Heart left ventricle (tissue), 16 donors: ENCODE measurements at regions of chr16 and their contacts with region 1.

Region 1: DNA sequence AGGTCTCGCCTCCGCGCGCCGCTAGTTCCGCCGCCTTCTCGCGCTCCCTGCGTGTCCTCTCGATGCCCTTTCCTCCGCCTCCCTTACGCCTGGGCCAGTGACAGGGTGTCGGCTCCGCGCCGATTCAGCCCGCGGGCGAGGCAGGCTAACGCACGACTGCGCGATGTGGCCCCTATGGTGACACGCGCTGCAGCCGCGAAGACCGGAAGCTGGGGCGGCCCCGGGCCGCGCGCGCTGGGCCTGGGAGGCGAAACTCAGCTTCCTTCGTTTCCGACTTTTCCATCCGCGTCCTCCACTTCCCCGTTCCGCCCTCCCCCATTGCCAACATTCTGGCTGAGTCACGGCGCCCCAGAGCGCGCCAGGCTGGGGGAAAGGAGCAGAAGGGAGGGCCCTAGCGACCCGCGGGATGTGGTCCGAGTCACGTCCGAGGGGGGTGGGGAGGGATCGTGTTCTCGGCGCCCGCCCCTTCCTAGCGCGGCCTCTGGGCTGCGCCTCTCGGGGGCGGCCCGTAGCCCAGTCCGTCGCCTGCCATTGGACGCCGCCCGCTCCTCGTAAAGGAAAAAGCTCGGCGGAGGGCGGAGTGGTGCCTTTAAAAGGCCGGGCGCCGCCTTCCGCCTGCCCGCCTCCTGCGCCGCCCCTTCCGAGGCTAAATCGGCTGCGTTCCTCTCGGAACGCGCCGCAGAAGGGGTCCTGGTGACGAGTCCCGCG is at the start of gene ALDOA:
- DNase-seq: peak; percentile 99
- ATAC-seq: peak; percentile 87 to 93 (median 90)
- H3K4me3 ChIP-seq: peak within 1 kb of the TSS; percentile 84 to 99 (median 96)
- H3K27ac ChIP-seq: peak within 1 kb of the TSS; percentile 92 to 100 (median 99)
- H3K4me1 ChIP-seq: peaks cover 0 to 63% (median 55%) of the 10 kb centered on the region in 12 donors
- H3K27me3 ChIP-seq: no peaks in the 10 kb centered on the region
- CTCF ChIP-seq: peak in 1 of 12 donors; percentile 27
- POLR2A ChIP-seq: peak; percentile 98 to 99
- total RNA-seq, gene ALDOA: 2,644 to 5,076 (median 3,574) TPM

Region 2: DNA sequence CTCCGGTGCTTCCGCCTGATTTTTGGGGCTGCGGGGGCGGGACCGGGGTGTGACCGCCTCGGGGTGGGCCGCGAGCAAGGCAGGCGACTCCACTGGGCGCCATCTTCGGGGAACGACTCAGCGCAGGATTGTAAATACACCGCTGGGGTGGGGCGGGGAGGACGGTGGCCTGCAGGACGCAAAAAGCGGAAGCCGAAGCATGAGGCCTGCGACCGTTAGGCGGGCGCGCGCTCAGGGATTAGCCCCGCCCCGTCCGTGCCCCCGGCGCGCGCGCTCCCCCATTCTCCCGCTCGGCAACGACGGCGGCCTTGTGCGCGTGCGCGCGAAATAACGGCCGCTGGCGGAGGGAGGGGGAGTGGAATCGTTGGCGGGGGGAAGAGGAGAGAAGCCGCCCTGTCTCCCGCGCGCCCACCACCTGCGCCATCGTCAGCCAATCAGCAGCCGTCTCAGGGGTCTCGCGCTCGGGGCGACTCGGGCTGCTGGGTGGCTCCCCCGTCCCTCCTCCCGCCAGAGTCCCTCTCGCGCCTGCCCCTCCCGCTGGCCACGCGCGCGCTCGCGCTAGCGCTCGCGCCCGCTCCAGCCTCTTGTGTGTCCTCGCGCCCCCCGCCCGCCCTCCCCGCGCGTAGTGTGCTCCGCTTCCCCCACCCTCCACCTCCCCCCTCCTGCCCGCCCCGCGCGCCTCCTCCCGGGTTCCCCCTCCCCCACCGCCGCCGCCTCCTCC is 259.8 kb before region 1 on chr16:
- intact Hi-C with region 1: loop called in 1 of 10 experiments (anchors 5 kb)
- DNase-seq: peak; percentile 98 to 99 (median 98)
- ATAC-seq: peak; percentile 84 to 89 (median 88)
- H3K4me3 ChIP-seq: peak overlapping the region; percentile 65 to 98 (median 83)
- H3K27ac ChIP-seq: peak overlapping the region; percentile 95 to 100 (median 99)
- H3K4me1 ChIP-seq: peaks cover 3 to 47% (median 42%) of the 10 kb centered on the region in 12 donors
- H3K27me3 ChIP-seq: no peaks in the 10 kb centered on the region
- CTCF ChIP-seq: no peak
- POLR2A ChIP-seq: peak in 1 of 2 donors; percentile 81

Region 3: DNA sequence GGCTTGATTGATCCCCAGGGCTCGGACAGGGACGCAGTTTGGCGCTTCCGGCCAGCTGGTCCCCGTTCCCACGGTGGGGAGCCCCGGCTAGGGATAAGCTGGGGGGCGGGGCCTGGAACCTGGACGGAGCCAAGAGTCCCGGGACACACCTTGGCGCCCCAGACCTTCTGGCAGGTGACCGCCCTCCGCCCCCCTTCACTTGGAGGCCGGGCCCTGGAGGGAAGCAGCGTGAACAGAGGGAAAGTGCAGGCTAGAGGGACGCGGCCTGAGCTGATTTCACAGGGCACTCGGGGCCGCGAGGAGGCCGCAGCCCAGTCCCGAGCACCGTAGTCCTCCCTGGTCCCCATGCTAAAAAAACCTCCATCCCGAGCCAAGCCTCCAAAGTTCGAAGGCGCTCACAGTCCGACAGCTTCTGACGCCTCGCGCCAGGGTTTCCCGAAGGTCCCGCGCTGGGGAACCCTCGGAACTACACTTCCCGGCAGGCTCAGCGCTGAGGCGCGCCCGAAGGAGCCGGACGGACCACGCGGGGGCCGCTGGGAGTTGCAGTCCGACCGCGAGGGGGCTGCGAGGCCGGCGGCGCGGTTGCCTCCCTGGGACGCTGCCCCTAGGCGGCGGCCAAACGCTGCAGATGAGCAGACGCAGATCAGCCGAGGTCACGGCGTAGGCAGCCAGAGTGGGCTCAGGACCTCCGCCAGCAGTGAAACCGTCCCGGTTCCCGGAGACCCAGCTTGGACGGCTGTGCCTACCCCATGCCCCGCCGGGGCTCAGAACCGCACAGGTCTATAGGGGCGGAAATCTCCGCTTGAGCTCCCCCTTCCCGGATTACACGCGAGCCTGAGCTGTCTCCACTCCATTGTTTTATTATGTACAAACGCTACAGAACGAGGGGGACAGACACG is 26.4 kb after region 1 on chr16 and contains the start of gene TBX6:
- intact Hi-C with region 1: loop called in 1 of 10 experiments (anchors 1 kb)
- DNase-seq: peak; percentile 94 to 98 (median 95)
- ATAC-seq: peak; percentile 83 to 91 (median 90)
- H3K4me3 ChIP-seq: peak within 1 kb of the TSS; percentile 24 to 66 (median 56)
- H3K27ac ChIP-seq: peak within 1 kb of the TSS; percentile 34 to 95 (median 88)
- H3K4me1 ChIP-seq: peaks cover 4 to 69% (median 41%) of the 10 kb centered on the region in 12 donors
- H3K27me3 ChIP-seq: no peaks in the 10 kb centered on the region
- CTCF ChIP-seq: peak; percentile 63 to 95 (median 72)
- POLR2A ChIP-seq: peak in 1 of 2 donors; percentile 51
- total RNA-seq, gene TBX6: 0.39 to 0.95 (median 0.72) TPM in 8 of 9 donors, not detected in the other

Region 4: DNA sequence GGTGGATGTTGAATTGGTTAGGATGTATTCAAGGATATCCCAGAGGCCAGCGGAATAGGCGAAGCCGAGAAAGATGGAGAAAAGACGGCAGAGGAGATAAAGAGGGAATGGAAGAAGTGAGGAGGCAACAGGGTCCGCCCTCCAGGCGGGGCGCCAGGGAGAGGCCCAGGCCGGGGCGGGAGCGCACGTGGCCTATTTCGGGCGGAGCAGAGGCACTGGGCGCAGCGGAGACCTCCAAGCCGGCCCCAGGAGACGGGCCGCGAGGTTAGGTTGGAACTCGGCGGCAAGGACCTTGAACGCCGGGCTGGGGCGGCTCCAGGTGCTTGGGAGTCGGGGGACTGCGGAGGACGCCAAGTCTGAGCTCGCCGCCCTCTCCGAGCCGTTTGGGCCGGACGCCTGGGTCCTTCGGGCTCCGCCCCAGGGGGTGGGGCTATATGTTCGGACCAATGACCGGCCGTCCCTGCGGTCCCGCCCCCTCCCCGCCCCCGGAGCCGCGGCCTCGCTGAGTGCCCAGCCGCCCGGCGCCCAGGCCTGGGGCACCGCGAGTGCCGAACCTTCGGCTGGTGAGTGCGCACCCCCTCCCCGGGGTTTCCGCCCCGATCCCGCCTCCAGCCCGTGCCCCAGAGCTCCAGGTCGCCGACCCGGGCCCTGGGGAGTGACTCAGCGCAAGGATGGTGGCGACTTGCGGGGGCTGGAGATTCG is 342.0 kb after region 1 on chr16 and contains the start of gene ZNF771:
- intact Hi-C with region 1: loop called in 3 of 10 experiments (anchors 5 to 10 kb)
- DNase-seq: peak; percentile 94 to 97 (median 94)
- ATAC-seq: peak; percentile 83 to 97 (median 96)
- H3K4me3 ChIP-seq: peak within 1 kb of the TSS; percentile 54 to 96 (median 76)
- H3K27ac ChIP-seq: peak within 1 kb of the TSS; percentile 61 to 93 (median 85)
- H3K4me1 ChIP-seq: peaks cover 0 to 33% (median 17%) of the 10 kb centered on the region in 12 donors
- H3K27me3 ChIP-seq: no peaks in the 10 kb centered on the region
- CTCF ChIP-seq: peak in 3 of 12 donors; percentile 15 to 18 (median 15)
- POLR2A ChIP-seq: peak in 1 of 2 donors; percentile 59
- total RNA-seq, gene ZNF771: 4.8 to 18.8 (median 6.8) TPM

Region 5: GRCh38 chr16:30526823-30527635 is 461.7 kb after region 1 on chr16:
- intact Hi-C with region 1: loop called in 1 of 10 experiments (anchors 10 kb)
- DNase-seq: peak; percentile 99 to 100 (median 99)
- ATAC-seq: peak; percentile 93 to 97 (median 94)
- H3K4me3 ChIP-seq: peak overlapping the region; percentile 35 to 98 (median 86)
- H3K27ac ChIP-seq: peak overlapping the region; percentile 95 to 100 (median 99)
- H3K4me1 ChIP-seq: peaks cover 0 to 44% (median 19%) of the 10 kb centered on the region in 12 donors
- H3K27me3 ChIP-seq: no peaks in the 10 kb centered on the region
- CTCF ChIP-seq: peak in 10 of 12 donors; percentile 5 to 53 (median 28)
- POLR2A ChIP-seq: peak; percentile 38 to 86